ENCODE measurements at regions of chr1 and their contacts with region 1.

Region 1: GRCh38 chr1:6401673-6402072 is 8.1 kb upstream of the ACOT7 start:
- DNase-seq: no peak
- H3K4me3 Mint-ChIP-seq: no peak overlapping the region
- H3K27ac Mint-ChIP-seq: no peak overlapping the region
- H3K4me1 Mint-ChIP-seq: peaks cover 3% of the 10 kb centered on the region
- H3K27me3 Mint-ChIP-seq: no peaks in the 10 kb centered on the region

Region 2: DNA sequence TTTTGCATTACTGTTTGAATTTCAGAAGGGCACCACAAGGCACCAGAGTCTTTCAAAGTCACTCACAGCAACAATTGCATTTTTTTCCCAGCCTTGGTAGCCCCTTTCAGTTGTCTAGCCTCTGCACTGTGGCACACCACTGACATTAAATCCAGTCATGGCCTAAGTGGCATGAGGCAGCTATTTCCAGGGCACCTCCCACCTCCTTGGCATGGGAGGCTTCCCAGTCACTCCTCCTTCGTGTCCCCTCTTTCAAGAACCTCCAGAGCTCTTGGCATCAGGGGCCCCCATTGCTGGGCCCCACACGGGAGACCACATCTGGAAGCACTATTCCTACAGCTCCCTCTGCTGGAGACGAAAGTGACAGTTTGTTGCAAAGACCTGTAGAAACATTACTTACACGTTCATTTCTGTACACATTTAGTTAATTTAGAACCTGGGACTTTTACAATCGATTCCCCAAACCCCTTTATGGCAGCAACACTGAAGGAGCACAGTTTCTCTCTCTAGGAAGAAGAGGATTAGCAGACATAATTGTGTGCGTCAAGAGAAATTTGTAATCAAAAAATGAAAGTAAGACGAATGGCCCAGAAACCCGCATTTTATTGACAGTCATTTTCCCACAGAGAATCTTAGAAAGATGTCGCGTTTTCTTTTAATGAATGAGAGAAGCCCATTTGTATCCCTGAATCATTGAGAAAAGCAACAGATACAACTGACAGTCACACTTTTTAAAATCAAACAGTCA is 215.9 kb before region 1 on chr1:
- CTCF ChIA-PET with region 1: no interaction called
- POLR2A ChIA-PET with region 1: no interaction called
- intact Hi-C with region 1: no loop called
- DNase-seq: peak; percentile 49
- H3K4me3 Mint-ChIP-seq: no peak overlapping the region
- H3K27ac Mint-ChIP-seq: peak overlapping the region; percentile 15
- H3K4me1 Mint-ChIP-seq: peaks cover 44% of the 10 kb centered on the region
- H3K27me3 Mint-ChIP-seq: peaks cover 13% of the 10 kb centered on the region

Region 3: DNA sequence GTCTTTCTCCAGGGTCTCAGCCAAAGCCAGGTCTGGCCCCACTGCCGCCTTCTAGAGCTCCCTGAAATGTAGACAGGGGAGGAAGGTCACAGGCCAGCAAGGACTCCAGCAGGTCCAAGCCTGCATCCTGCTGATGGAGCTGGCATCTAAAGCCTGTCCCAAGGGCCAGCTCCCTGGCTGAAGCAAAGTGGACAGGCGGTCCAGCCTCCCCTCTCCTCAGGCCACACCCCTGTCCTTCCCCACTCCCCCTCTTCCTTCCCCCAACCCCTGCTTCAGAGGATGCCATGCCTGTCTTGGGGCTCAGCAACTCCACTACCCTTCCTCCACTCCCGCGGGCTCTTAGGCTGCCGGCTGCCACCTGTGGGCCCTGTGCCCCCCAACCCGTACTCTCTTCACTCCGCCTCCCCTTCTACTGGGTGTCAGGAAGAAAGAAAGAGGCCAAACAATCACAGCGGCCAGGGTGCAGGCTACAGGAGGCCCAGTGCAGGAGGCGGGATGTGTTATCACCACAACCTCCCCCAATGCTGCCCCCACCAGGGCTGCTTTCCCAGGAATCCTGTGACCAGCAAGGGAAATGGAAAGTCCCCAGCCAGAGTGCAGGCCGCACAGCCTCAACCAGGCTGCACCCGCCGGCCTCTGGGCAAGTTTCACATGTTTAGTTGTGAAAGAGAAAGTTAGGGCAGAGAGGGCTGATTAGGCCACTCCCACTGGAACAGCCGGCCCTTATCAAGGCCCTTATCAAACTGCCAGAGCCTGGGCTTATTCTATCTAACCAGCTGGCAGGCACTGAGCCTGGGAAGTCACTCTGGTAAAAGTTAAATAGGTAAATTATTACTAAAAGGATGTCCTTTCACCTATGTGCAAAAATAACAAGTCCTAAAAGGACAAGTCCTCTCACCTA is 42.2 kb before region 1 on chr1:
- CTCF ChIA-PET with region 1: interaction called, 28 read pairs
- POLR2A ChIA-PET with region 1: no interaction called
- intact Hi-C with region 1: loop called (anchors 2 kb)
- DNase-seq: peak; percentile 74
- H3K4me3 Mint-ChIP-seq: peak overlapping the region; percentile 55
- H3K27ac Mint-ChIP-seq: peak overlapping the region; percentile 90
- H3K4me1 Mint-ChIP-seq: peaks cover 42% of the 10 kb centered on the region
- H3K27me3 Mint-ChIP-seq: no peaks in the 10 kb centered on the region